Activated T-helper 1 cell treated with anti-CD3 and anti-CD28 coated beads, Interleukin-12 subunit alpha, Interleukin-12 subunit beta, Interleukin-2, Interleukin-4 antibody, amounts not matched to agents 30 ng/mL and 10 ng/mL and 1 ng/mL, durations not matched to agents 14 hours and 24 hours and 36 hours (primary cell): ENCODE measurements at regions of chr9 and their contacts with region 1.

Region 1: DNA sequence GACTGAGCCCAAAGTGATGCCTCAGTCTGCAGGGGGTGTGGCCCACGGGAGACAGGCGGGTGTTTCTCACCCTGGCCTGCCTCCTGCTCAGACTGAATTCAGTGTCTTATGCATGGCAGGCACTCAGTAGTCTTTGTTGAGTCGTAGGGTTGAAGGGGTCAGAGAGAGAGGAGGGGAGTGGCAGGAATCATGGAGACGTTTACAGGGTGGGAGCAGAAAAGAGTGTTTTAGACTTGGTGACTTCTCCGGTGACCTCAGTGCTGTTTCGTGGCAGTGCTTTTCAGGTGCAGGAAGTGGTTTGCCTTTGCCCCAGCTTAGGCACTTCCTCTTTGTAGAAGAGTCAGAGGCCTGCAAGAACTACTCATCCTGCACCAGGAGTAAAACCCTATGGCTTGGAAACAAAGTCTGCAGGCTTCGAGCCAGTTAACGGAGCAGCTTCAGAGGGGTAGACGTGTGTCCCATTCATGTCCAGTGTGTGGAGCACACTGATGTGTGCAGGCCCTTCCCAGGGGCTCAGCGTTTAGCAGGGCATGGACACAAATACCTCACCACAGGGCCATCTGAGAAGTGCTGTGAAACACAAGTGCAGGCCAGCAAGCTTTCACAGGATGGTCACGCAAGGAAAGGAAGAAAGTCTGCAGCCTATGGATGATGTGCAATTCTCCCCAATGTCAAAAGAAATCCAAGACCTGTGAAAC is 24.5 kb upstream of the SEMA4D start:
- DNase-seq: peak; percentile 77
- H3K4me3 Mint-ChIP-seq: peak overlapping the region; percentile 81
- H3K27ac Mint-ChIP-seq: peak overlapping the region; percentile 99
- H3K4me1 Mint-ChIP-seq: peaks cover 91% of the 10 kb centered on the region
- H3K27me3 Mint-ChIP-seq: no peaks in the 10 kb centered on the region

Region 2: DNA sequence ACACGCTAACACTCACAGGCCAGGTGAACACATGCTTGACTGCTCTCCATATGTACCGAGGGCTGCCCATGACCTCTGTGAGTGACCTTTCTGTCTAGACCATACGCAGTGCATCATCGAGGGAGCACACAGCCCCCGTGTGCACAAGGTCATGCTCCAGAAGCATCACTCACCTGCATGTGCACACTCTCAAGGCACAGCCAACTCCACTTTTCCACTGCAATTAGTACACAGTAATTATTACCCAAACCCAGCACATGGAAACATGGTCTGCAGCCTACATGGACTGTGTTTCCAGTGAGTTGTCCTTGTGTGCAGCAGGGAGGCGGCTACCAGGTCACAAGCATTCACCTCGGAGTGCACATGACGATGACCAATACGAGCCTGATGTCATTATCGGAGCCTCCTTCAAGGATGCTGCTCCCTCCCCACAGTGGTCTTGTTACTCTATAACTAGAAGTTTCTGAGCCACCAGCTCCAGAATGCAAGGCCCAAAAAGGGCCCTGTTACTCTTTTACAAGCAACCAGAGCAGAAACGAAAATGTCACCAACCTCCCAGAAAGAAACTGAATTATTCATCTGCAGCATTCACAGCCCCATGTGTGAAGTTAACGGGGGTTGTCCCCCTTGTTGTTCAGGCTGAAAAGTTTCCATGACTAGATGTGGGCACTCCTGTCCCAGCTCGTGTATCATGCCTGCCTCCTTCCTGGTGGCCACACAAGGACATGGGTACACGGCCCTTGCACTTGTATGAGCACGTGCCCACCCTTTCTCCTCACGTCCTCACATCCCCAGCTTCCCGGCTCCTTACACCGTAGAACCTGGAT is 55.7 kb before region 1 on chr9:
- intact Hi-C with region 1: loop called (anchors 2 kb)
- DNase-seq: peak; percentile 44
- H3K4me3 Mint-ChIP-seq: peak overlapping the region; percentile 73
- H3K27ac Mint-ChIP-seq: peak overlapping the region; percentile 98
- H3K4me1 Mint-ChIP-seq: peaks cover 93% of the 10 kb centered on the region
- H3K27me3 Mint-ChIP-seq: no peaks in the 10 kb centered on the region